Gastrocnemius medialis (tissue), 4 donors: ENCODE measurements at regions of chr9 and their contacts with region 1.

Region 1: DNA sequence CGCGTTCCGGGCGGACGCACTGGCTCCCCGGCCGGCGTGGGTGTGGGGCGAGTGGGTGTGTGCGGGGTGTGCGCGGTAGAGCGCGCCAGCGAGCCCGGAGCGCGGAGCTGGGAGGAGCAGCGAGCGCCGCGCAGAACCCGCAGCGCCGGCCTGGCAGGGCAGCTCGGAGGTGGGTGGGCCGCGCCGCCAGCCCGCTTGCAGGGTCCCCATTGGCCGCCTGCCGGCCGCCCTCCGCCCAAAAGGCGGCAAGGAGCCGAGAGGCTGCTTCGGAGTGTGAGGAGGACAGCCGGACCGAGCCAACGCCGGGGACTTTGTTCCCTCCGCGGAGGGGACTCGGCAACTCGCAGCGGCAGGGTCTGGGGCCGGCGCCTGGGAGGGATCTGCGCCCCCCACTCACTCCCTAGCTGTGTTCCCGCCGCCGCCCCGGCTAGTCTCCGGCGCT is at the start of gene DAPK1:
- DNase-seq: peak in 1 of 2 donors; percentile 12
- ATAC-seq: peak; percentile 50 to 63
- H3K4me3 ChIP-seq: peak within 1 kb of the TSS; percentile 66 to 76 (median 72)
- H3K27ac ChIP-seq: peak within 1 kb of the TSS; percentile 7 to 62 (median 44)
- H3K4me1 ChIP-seq: peaks cover 6 to 18% of the 10 kb centered on the region in 2 donors
- H3K27me3 ChIP-seq: peaks cover 0 to 4% (median 2%) of the 10 kb centered on the region in 3 donors
- CTCF ChIP-seq: no peak
- POLR2A ChIP-seq: peak; percentile 30 to 56
- total RNA-seq, gene DAPK1: 1.2 to 4.3 (median 2.7) TPM

Region 2: GRCh38 chr9:87336914-87337333 is 160.7 kb before region 1 on chr9:
- in situ Hi-C with region 1: no loop called
- intact Hi-C with region 1: loop called (anchors 5 kb)
- DNase-seq: no peak
- ATAC-seq: peak; percentile 55 to 73
- H3K4me3 ChIP-seq: peak overlapping the region in 3 of 4 donors; percentile 6 to 23 (median 11)
- H3K27ac ChIP-seq: no peak overlapping the region
- H3K4me1 ChIP-seq: no peaks in the 10 kb centered on the region
- H3K27me3 ChIP-seq: peaks cover 0 to 6% (median 0%) of the 10 kb centered on the region in 3 donors
- CTCF ChIP-seq: peak; percentile 42 to 62 (median 60)
- POLR2A ChIP-seq: no peak

Region 3: DNA sequence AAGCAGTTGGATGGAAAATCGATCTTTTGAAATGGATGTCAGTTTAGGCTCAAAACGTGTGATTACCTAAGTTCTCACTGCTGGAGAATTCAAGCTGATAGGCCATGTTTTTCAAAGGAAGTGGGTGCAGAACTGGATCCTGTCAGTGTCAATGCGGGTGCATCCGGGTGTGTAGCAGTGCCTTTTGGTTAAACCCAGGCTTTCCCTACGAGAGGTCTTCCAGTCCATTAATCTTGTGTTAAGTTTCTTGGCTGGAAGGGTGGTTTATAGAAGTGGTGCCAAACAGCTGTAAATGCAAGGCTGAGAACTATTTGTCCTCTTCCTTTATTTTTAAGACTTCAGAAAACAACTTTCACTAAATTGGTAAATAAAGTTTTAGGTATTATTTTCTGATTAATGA is 71.9 kb after region 1 on chr9:
- in situ Hi-C with region 1: loop called in 1 of 4 experiments (anchors 10 kb)
- intact Hi-C with region 1: no loop called
- DNase-seq: no peak
- ATAC-seq: no peak
- H3K4me3 ChIP-seq: no peak overlapping the region
- H3K27ac ChIP-seq: no peak overlapping the region
- H3K4me1 ChIP-seq: peaks cover 0 to 4% of the 10 kb centered on the region in 2 donors
- H3K27me3 ChIP-seq: no peaks in the 10 kb centered on the region
- CTCF ChIP-seq: no peak
- POLR2A ChIP-seq: no peak

Region 4: DNA sequence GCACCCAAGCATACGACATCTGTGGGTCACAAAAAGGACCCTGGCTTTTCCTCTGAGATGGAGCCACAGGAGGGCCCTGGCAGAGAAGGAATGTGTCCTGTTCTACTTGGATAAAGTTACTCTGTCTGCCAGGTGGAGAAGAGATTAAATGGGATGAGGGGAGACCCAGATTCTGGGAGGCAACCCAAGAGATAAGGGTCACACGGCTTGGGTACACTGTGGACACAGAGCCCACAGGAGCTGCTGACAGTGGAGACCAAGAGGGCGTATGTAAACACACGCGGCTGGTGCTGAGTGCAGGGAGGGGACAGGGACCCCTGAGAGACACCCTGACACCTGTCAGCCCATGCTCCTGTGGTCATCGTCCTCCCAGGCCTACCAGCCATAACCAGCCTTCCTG is 470.5 kb after region 1 on chr9:
- in situ Hi-C with region 1: no loop called
- intact Hi-C with region 1: no loop called
- DNase-seq: no peak
- ATAC-seq: no peak
- H3K4me3 ChIP-seq: no peak overlapping the region
- H3K27ac ChIP-seq: no peak overlapping the region
- H3K4me1 ChIP-seq: no peaks in the 10 kb centered on the region
- H3K27me3 ChIP-seq: no peaks in the 10 kb centered on the region
- CTCF ChIP-seq: no peak
- POLR2A ChIP-seq: no peak